ENCODE measurements at regions of chr16 and their contacts with region 1.

Region 1: DNA sequence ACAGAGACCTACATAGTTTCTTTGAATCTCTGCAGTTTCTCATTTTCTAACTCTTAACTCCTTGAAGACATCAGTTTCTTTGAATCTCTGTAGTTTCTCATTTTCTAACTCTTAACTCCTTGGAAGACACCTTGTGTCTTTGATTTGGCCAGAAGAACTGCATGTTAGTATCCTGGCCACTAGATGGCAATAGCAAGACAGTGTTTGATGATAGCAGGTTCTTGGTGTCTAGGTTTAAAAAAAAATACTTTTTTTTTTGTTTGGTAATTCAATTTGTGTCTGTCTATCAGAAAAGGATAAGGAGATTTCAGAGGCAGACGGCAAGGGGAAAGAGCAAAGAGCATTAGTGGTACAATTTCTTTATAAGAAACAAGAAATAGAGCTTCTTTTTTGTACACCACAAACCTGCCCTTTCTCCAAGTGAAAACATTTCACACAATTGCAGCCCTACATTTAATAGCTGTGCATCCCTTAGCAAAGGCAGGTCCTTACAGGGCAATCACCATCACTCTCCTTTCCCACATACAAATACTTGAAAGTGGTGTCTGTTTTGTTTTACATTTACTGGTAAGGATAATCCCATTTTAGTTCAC is 1324.9 kb upstream of the CDH8 start:
- DNase-seq: peak; percentile 23
- H3K4me3 Mint-ChIP-seq: no peak overlapping the region
- H3K27ac Mint-ChIP-seq: no peak overlapping the region
- H3K4me1 Mint-ChIP-seq: no peaks in the 10 kb centered on the region
- H3K27me3 Mint-ChIP-seq: no peaks in the 10 kb centered on the region
- CTCF ChIP-seq: peak; percentile 72

Region 2: GRCh38 chr16:63349961-63350360 is 11.2 kb before region 1 on chr16:
- CTCF ChIA-PET with region 1: no interaction called
- intact Hi-C with region 1: no loop called
- DNase-seq: no peak
- H3K4me3 Mint-ChIP-seq: no peak overlapping the region
- H3K27ac Mint-ChIP-seq: no peak overlapping the region
- H3K4me1 Mint-ChIP-seq: no peaks in the 10 kb centered on the region
- H3K27me3 Mint-ChIP-seq: no peaks in the 10 kb centered on the region
- CTCF ChIP-seq: no peak

Region 3: GRCh38 chr16:63461248-63461841 is 100.2 kb after region 1 on chr16:
- CTCF ChIA-PET with region 1: no interaction called
- intact Hi-C with region 1: no loop called
- DNase-seq: no peak
- H3K4me3 Mint-ChIP-seq: no peak overlapping the region
- H3K27ac Mint-ChIP-seq: no peak overlapping the region
- H3K4me1 Mint-ChIP-seq: no peaks in the 10 kb centered on the region
- H3K27me3 Mint-ChIP-seq: no peaks in the 10 kb centered on the region
- CTCF ChIP-seq: no peak

Region 4: DNA sequence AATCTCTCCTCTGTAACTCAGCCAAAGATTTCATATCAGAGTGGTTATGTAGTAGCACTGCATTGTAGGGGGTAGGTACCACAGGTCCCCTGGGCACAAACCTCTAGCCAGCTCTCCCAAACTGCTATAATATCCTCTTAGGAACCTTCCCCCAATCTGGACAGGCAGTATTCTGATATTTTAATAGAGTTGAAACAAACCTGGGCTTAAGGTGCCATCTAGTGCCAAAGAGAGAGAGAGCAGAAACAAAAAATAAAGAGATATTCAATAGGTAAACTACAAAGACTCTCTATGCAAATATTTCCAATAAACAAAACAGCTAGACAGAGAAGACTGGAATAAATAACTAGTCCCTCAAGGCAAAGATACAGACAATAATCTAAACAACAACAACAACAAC is 690.7 kb after region 1 on chr16:
- CTCF ChIA-PET with region 1: no interaction called
- intact Hi-C with region 1: loop called (anchors 2 kb)
- DNase-seq: no peak
- H3K4me3 Mint-ChIP-seq: no peak overlapping the region
- H3K27ac Mint-ChIP-seq: no peak overlapping the region
- H3K4me1 Mint-ChIP-seq: no peaks in the 10 kb centered on the region
- H3K27me3 Mint-ChIP-seq: no peaks in the 10 kb centered on the region
- CTCF ChIP-seq: no peak

Region 5: DNA sequence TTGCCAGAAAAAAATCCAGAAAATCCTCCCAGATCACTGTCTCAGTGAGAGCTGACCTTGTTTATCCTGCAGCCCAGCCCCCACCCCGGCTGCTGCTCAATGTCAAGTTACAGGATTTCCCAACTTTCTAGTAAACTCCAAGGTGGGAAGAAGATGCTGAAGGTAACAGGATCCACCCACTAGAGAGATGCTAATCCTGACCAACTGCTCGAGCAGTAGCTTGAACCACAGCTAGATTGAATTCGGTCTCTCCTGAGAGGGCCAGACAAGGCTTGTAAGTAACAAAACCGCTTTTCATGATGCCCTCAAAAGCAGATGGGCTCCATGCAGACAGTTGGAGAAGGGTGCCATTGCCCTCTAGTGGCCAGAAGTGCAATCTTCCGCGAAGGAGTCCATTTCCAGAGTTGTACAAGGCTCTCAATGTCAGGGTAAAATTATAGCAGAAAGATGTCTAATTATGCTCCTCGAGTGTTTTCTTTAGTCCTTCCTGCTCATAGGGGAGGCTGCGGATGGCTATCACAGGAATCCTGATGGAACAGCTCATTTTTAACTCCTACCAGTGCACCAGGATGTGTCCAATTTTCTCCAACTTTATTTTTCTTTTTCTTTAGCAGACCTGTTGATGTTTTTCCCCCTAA is 1756.8 kb after region 1 on chr16:
- CTCF ChIA-PET with region 1: no interaction called
- intact Hi-C with region 1: loop called (anchors 1 kb)
- DNase-seq: peak; percentile 54
- H3K4me3 Mint-ChIP-seq: no peak overlapping the region
- H3K27ac Mint-ChIP-seq: no peak overlapping the region
- H3K4me1 Mint-ChIP-seq: no peaks in the 10 kb centered on the region
- H3K27me3 Mint-ChIP-seq: no peaks in the 10 kb centered on the region
- CTCF ChIP-seq: peak; percentile 85

Measured in Calu3 (cell line).